ENCODE measurements at regions of chr7 and their contacts with region 1.

Region 1: DNA sequence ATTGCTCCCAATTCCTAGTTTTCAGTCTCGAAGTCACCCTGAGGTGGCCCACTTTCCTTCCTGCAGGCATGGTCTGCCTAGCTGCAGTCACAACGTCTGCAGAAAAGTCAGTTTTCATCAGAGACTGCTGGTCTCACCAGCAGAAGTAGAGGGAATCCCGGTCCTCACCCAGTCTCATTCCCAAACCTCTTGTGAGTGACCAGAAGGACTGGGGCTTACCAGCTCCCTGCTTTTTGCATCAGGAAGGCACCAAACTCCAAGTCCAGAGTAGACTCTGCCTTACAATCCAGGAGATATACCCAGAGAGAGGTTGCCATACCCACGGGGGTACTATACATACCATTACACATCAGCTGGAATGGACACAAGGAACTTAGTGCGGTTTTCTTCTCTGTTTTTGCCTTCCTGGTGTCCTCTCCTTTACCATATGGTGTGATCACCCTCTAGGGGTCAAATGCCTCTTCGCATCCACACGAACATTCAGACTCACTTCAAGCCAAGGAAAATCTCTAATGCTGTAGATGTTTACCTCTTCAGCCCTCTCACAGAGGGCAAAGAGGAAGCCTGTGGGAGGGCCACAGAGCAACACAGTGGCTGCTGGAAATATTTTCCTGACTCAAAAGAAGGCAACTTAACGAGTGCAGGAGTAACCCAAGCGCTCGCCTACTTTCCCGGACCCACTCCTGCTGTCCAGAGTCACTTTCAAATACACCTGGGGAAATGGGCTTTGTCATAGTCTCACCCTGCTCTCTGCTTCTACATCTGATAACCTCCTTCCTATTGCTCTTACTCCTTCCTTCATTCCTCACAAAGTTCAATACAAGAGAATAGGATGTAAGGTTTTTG is 220.9 kb downstream of the C7orf25 start:
- DNase-seq: no peak
- CTCF ChIP-seq: no peak

Region 2: GRCh38 chr7:41661596-41661995 is 1029.4 kb before region 1 on chr7:
- in situ Hi-C with region 1: no loop called
- DNase-seq: no peak
- CTCF ChIP-seq: no peak

Region 3: GRCh38 chr7:41977151-41977651 is 713.8 kb before region 1 on chr7:
- in situ Hi-C with region 1: loop called (anchors 25 kb)
- DNase-seq: no peak
- CTCF ChIP-seq: no peak

Measured in GM13976 (cell line).